ENCODE measurements at regions of chr5 and their contacts with region 1.

Region 1: GRCh38 chr5:38809388-38810359 is 36.1 kb upstream of the OSMR start:
- DNase-seq: peak; percentile 90
- ATAC-seq: peak; percentile 95

Region 2: DNA sequence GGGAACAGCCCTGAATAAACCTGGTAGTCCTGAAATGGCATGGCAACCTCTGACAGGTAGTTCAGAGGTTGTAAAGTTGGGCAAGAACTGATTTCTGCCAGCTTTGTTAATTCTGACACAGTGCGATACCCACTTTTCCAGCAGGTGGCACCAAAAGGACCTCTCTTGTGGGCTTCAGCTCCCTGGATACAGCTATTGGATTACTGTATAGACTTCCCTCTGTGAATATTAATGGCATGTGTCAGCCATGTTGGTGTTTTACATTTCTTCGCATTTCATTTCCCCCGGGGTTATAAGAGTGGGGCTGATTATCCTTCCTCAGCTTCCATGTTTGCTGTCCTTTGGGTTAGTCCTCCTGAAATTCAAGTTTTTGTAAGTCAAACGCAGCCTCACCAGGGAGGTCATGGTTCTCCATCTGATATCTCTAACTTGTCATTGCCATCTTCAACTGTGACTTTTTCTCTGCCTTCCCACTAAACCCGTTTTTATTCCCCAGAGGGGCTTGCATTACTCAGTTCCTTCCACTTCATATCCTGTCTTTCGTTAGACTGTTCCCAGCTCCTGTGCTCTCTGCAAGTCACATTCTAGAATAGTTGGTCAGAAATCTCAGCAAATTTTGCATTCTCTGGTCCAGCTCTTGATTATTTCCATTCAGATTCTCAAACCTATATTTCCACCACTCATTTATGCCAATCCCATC is 388.8 kb before region 1 on chr5:
- intact Hi-C with region 1: loop called (anchors 1 kb)
- DNase-seq: peak; percentile 78
- ATAC-seq: peak; percentile 41

Measured in sciatic nerve (tissue), 2 donors.